CD8-positive, alpha-beta T cell (primary cell): ENCODE measurements at regions of chr2 and their contacts with region 1.

Region 1: GRCh38 chr2:195257979-195258378 is 399.0 kb upstream of the SLC39A10 start:
- DNase-seq: no peak
- ATAC-seq: no peak
- H3K4me3 ChIP-seq: no peak overlapping the region
- H3K4me3 Mint-ChIP-seq: no peak overlapping the region
- H3K27ac ChIP-seq: no peak overlapping the region
- H3K27ac Mint-ChIP-seq: no peak overlapping the region
- H3K4me1 ChIP-seq: no peaks in the 10 kb centered on the region
- H3K4me1 Mint-ChIP-seq: no peaks in the 10 kb centered on the region
- H3K27me3 ChIP-seq: no peaks in the 10 kb centered on the region
- H3K27me3 Mint-ChIP-seq: no peaks in the 10 kb centered on the region
- CTCF ChIP-seq: no peak

Region 2: GRCh38 chr2:195199864-195200263 is 58.1 kb before region 1 on chr2:
- CTCF ChIA-PET with region 1: no interaction called
- POLR2A ChIA-PET with region 1: no interaction called
- intact Hi-C with region 1: loop called in 1 of 2 experiments (anchors 2 kb)
- DNase-seq: no peak
- ATAC-seq: no peak
- H3K4me3 ChIP-seq: no peak overlapping the region
- H3K4me3 Mint-ChIP-seq: no peak overlapping the region
- H3K27ac ChIP-seq: no peak overlapping the region
- H3K27ac Mint-ChIP-seq: no peak overlapping the region
- H3K4me1 ChIP-seq: peaks cover 7% of the 10 kb centered on the region
- H3K4me1 Mint-ChIP-seq: peaks cover 16% of the 10 kb centered on the region
- H3K27me3 ChIP-seq: no peaks in the 10 kb centered on the region
- H3K27me3 Mint-ChIP-seq: no peaks in the 10 kb centered on the region
- CTCF ChIP-seq: no peak

Region 3: DNA sequence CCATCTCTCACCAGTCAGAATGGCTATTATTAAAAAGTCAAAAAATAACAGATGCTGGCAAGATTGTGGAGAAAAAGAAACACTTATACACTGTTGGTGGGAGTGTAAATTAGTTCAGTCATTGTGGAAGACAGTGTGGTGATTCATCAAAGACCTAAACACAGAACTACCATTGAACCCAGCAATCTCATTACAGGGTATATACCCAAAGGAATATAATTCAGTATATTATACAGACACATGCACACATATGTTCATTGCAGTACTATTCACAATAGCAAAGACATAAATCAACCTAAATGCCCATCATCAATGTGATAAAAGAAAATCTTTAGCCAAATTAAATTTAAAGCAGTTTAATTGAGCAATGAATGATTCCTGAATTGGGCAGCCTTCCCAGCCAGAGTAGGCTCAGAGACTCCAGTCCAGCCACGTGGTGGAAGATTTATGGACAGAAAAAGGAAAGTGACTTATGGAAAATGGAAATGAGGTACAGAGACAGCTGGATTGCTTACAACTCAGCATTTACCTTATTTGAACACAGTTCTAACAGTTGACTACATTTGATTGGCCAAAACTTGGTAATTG is 22.0 kb after region 1 on chr2:
- CTCF ChIA-PET with region 1: no interaction called
- POLR2A ChIA-PET with region 1: no interaction called
- intact Hi-C with region 1: no loop called
- DNase-seq: no peak
- ATAC-seq: no peak
- H3K4me3 ChIP-seq: no peak overlapping the region
- H3K4me3 Mint-ChIP-seq: no peak overlapping the region
- H3K27ac ChIP-seq: no peak overlapping the region
- H3K27ac Mint-ChIP-seq: no peak overlapping the region
- H3K4me1 ChIP-seq: no peaks in the 10 kb centered on the region
- H3K4me1 Mint-ChIP-seq: no peaks in the 10 kb centered on the region
- H3K27me3 ChIP-seq: no peaks in the 10 kb centered on the region
- H3K27me3 Mint-ChIP-seq: no peaks in the 10 kb centered on the region
- CTCF ChIP-seq: no peak

Region 4: DNA sequence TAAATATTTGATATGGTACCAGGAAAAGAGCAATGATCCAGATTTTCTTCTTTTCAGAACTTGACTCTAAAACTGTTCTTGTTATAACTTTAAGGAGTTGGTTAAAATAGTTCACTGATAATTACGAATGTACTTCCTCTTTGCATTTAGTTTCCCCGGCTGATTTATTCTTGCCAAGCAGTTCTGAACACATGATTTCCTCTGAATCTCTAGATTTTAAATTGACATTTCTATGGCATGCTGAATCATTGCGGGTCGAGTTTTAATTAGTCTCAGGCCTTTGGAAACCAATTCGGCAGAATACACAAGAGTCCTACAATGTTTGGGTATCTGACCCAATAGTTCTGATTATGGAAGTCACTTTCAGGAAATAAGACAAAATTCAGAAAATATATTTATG is 848.0 kb after region 1 on chr2:
- CTCF ChIA-PET with region 1: no interaction called
- POLR2A ChIA-PET with region 1: no interaction called
- intact Hi-C with region 1: no loop called
- DNase-seq: no peak
- ATAC-seq: no peak
- H3K4me3 ChIP-seq: no peak overlapping the region
- H3K4me3 Mint-ChIP-seq: peak overlapping the region; percentile 52
- H3K27ac ChIP-seq: no peak overlapping the region
- H3K27ac Mint-ChIP-seq: no peak overlapping the region
- H3K4me1 ChIP-seq: peaks cover 12% of the 10 kb centered on the region
- H3K4me1 Mint-ChIP-seq: peaks cover 24% of the 10 kb centered on the region
- H3K27me3 ChIP-seq: no peaks in the 10 kb centered on the region
- H3K27me3 Mint-ChIP-seq: no peaks in the 10 kb centered on the region
- CTCF ChIP-seq: no peak